ENCODE measurements at regions of chr4 and their contacts with region 1.

Region 1: GRCh38 chr4:75030733-75031132 is 97.8 kb downstream of the PARM1 start:
- H3K4me3 Mint-ChIP-seq: peak overlapping the region; percentile 21
- H3K27ac Mint-ChIP-seq: peak overlapping the region; percentile 78
- H3K4me1 Mint-ChIP-seq: peaks cover 60% of the 10 kb centered on the region
- H3K27me3 Mint-ChIP-seq: no peaks in the 10 kb centered on the region

Region 2: DNA sequence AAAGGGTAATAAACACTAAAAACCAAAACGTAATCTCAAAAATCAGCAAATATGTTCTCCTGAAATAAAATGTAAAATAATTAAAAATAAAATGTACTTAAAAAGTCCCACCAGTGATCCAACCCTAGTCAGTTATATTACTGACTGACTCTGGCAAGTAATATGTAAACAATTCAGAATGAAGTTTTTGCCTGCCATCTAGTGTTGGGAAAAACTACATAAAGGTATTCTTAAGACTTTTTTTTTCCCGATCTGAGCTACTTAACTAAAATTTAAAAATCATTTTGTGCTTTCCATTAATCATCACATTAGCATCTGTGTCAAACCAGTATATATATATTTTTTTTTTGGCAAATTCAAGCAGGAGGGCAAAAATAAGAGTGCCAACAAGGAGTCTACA is 459.4 kb after region 1 on chr4:
- intact Hi-C with region 1: loop called (anchors 10 kb)
- H3K4me3 Mint-ChIP-seq: no peak overlapping the region
- H3K27ac Mint-ChIP-seq: no peak overlapping the region
- H3K4me1 Mint-ChIP-seq: peaks cover 8% of the 10 kb centered on the region
- H3K27me3 Mint-ChIP-seq: no peaks in the 10 kb centered on the region

Measured in dendritic cell treated with granulocyte-macrophage colony-stimulating factor and Interleukin-4, amounts not matched to agents 40 ng/mL and 50 ng/mL, for 4 days (primary cell).